Activated T-helper 1 cell treated with anti-CD3 and anti-CD28 coated beads, Interleukin-12 subunit alpha, Interleukin-12 subunit beta, Interleukin-2, Interleukin-4 antibody, amounts not matched to agents 30 ng/mL and 10 ng/mL and 1 ng/mL, durations not matched to agents 14 hours and 24 hours and 36 hours (primary cell): ENCODE measurements at regions of chr17 and their contacts with region 1.

Region 1: GRCh38 chr17:75877752-75878173 is 618 bp downstream of the TRIM47 start:
- DNase-seq: peak; percentile 71
- H3K4me3 Mint-ChIP-seq: peak overlapping the region; percentile 93
- H3K27ac Mint-ChIP-seq: peak overlapping the region; percentile 95
- H3K4me1 Mint-ChIP-seq: peaks cover 32% of the 10 kb centered on the region
- H3K27me3 Mint-ChIP-seq: peaks cover 16% of the 10 kb centered on the region

Region 2: DNA sequence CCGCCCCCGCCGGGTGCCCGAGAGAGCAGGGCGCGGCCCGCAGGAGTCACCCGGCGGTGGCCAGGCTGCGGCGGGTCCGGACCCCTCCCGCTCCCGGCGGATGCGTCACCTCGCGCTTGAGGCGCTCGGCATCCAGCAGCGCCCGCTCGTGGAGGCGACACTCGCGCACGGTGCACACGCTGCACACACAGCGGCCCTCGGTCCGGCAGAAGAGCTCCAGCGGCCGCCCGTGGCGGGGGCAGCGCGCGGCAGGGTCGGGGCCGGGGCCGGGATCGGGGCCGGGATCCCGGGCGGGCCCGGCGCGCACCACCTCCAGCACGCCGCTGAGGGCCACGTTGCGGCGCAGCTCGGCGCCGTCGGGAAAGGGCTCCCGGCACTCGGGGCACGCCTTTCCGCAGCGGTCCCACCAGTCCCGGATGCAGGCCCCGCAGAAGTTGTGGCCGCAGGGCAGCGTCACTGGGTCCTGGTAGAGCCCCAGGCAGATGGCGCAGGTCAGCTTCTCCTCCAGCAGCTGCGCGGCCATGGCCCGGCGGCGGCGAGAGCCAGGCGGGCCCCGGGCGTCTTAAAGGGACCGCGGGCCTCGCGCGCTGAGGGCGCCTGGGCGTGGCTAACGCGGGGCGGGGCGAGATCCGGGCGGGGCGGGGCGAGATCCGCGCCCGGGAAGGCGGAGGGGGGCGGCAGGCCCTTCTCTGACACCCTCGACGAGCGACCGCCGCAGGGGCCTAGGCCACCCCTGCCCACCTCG is 18.8 kb after region 1 on chr17 and contains the start of gene TRIM65:
- intact Hi-C with region 1: loop called (anchors 1 kb)
- DNase-seq: peak; percentile 73
- H3K4me3 Mint-ChIP-seq: peak within 1 kb of the TSS; percentile 91
- H3K27ac Mint-ChIP-seq: peak within 1 kb of the TSS; percentile 77
- H3K4me1 Mint-ChIP-seq: peaks cover 26% of the 10 kb centered on the region
- H3K27me3 Mint-ChIP-seq: no peaks in the 10 kb centered on the region
- total RNA-seq, gene TRIM65: 45.0 and 53.7 TPM in 2 replicates